Left ventricle myocardium superior (tissue), 1 donor: ENCODE measurements at regions of chr19 and their contacts with region 1.

Region 1: GRCh38 chr19:44841231-44841630 is 4.9 kb upstream of the NECTIN2 start:
- DNase-seq: no peak
- ATAC-seq: no peak

Region 2: DNA sequence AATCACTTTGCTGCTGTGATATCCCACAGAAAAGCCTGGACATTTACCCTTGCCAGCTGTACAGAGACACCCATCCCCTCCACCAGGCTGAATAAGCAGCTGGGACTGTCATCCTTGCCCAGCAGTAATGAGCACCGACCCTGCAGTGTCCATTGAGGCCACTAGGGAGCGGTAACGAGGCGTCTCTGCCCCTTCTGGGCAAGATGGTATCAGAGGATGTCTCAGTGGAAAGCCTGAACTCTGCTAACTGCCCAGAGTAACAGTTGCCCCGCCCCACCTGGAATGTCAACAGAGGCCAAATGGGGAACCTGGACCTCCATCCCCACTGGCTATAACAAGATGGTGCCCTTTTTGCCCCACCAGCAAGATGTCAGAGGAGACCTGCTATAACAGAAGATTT is 288.9 kb before region 1 on chr19:
- intact Hi-C with region 1: no loop called
- DNase-seq: no peak
- ATAC-seq: no peak

Region 3: DNA sequence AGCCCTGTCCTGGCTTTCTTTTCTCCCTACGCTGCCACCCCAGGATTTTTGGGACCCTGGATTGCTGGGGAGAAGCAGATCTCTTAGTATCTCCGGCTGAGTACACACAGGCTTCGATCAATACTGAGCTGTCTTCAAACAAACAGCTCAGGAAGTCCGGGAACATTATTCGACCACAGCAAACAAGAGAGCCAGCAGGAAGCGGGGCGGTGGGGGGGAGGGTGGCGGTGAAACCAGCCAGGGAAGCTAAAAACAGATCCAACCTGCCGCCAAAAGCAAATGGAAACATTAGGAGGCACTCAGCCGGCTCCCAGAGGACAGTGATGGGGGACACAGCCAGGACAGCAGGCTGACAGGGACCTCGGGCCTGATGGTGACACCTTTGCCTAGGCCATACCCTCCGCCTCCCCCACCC is 44.5 kb before region 1 on chr19:
- intact Hi-C with region 1: loop called (anchors 5 kb)
- DNase-seq: peak; percentile 66
- ATAC-seq: peak; percentile 91